IMR-90 (cell line): ENCODE measurements at regions of chr22 and their contacts with region 1.

Region 1: GRCh38 chr22:46576556-46577367 is 39.3 kb upstream of the CELSR1 start:
- DNase-seq: peak; percentile 35
- ATAC-seq: peak; percentile 86
- H3K4me3 ChIP-seq: peak overlapping the region; percentile 83
- H3K27ac ChIP-seq: no peak overlapping the region
- H3K4me1 ChIP-seq: peaks cover 16% of the 10 kb centered on the region
- H3K27me3 ChIP-seq: peaks cover 11% of the 10 kb centered on the region; the same call in 1 of the 2 replicates
- CTCF ChIP-seq: no peak
- POLR2A ChIP-seq: no peak
- RAD21 ChIP-seq: no peak

Region 2: GRCh38 chr22:46508491-46508999 is 68.2 kb before region 1 on chr22:
- CTCF ChIA-PET with region 1: no interaction called
- POLR2A ChIA-PET with region 1: no interaction called
- dilution Hi-C with region 1: no loop called
- in situ Hi-C with region 1: no loop called
- intact Hi-C with region 1: no loop called
- DNase-seq: no peak
- ATAC-seq: peak; percentile 32; the same call in 1 of the 2 replicates
- H3K4me3 ChIP-seq: no peak overlapping the region
- H3K27ac ChIP-seq: no peak overlapping the region
- H3K4me1 ChIP-seq: no peaks in the 10 kb centered on the region
- H3K27me3 ChIP-seq: peaks cover 10% of the 10 kb centered on the region; the same call in 1 of the 2 replicates
- CTCF ChIP-seq: no peak
- POLR2A ChIP-seq: no peak
- RAD21 ChIP-seq: no peak

Region 3: GRCh38 chr22:46542011-46542985 is 34.5 kb before region 1 on chr22:
- CTCF ChIA-PET with region 1: no interaction called
- POLR2A ChIA-PET with region 1: no interaction called
- dilution Hi-C with region 1: no loop called
- in situ Hi-C with region 1: no loop called
- intact Hi-C with region 1: no loop called
- DNase-seq: peak; percentile 50
- ATAC-seq: peak; percentile 95
- H3K4me3 ChIP-seq: no peak overlapping the region
- H3K27ac ChIP-seq: no peak overlapping the region
- H3K4me1 ChIP-seq: peaks cover 13% of the 10 kb centered on the region
- H3K27me3 ChIP-seq: peaks cover 21% of the 10 kb centered on the region
- CTCF ChIP-seq: peak; percentile 94
- POLR2A ChIP-seq: 0 out of 2 replicates have a peak, but pooled peaks have one; percentile 43
- RAD21 ChIP-seq: peak; percentile 96

Region 4: DNA sequence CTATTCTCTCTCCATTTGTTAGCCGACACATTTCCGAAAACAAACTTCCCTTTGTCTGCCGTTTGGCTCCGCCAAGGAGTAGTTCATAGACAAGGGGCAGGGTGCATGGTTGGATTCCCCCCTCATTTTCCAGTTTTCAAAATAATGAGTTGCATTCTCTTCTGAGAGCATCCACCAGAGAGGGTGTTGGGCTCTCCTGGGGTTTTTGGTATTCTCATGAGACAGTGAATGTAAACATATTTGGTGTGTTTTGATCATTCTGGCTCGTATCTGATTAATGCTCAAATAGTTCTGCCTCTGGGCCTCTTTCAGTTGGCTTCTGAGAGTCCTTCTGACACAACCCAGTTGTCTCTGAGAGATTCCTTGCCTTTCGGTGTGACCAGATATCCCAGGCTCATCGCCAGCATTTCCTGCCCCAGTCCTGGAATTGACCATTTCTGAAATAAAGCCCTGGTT is 65.1 kb after region 1 on chr22:
- CTCF ChIA-PET with region 1: no interaction called
- POLR2A ChIA-PET with region 1: no interaction called
- dilution Hi-C with region 1: no loop called
- in situ Hi-C with region 1: no loop called
- intact Hi-C with region 1: loop called (anchors 5 kb)
- DNase-seq: peak; percentile 36
- ATAC-seq: peak; percentile 67
- H3K4me3 ChIP-seq: no peak overlapping the region
- H3K27ac ChIP-seq: peak overlapping the region; percentile 77; the same call in 1 of the 2 replicates
- H3K4me1 ChIP-seq: peaks cover 10% of the 10 kb centered on the region
- H3K27me3 ChIP-seq: no peaks in the 10 kb centered on the region
- CTCF ChIP-seq: no peak
- POLR2A ChIP-seq: no peak
- RAD21 ChIP-seq: no peak

Region 5: DNA sequence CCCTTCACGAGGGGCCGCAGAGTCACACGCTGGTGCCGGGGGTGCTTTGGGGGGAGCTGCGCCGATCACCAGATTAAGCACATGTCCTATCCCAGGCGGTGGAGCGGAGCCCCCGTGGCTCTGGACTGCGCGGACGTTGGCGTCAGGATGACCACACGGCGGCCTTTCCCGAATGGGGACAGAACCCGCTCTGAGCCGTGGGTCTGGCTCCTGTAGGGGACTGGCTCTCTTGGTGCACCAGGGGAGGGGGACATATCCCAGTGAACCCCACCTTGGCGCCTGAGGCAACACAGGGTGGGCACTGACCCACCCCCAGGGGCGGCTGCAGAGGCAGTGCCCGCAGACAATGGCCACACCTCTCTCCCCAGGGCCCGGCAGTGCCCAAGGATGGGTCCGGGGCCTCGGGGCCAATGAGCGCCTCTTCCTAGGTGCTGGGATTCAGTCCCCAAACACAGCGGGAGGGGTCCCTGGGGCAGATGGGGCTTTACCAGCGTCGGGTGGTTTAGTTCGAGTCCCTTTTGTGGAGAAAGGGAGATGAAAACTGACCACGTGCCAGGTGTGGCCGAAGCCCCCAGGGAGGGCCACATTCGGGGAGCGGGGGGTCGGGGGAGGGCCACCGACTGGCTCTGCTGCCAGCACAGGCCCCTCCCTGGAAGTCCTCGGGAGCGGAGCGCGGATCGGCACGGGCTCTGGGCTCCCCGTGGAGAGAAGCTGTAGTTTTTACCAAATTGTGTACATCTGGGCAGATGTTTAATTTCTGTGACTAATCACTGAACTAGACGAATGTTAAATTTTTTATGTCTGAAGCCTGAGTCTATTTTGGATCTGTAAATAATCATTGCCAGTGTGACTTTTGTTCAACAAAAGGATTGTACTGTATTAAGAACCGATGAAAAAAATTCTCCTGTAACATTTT is 102.3 kb after region 1 on chr22:
- CTCF ChIA-PET with region 1: no interaction called
- POLR2A ChIA-PET with region 1: no interaction called
- dilution Hi-C with region 1: no loop called
- in situ Hi-C with region 1: no loop called
- intact Hi-C with region 1: loop called (anchors 5 kb)
- DNase-seq: peak; percentile 71
- ATAC-seq: peak; percentile 74
- H3K4me3 ChIP-seq: no peak overlapping the region
- H3K27ac ChIP-seq: peak overlapping the region; percentile 30; the same call in 1 of the 2 replicates
- H3K4me1 ChIP-seq: peaks cover 14% of the 10 kb centered on the region
- H3K27me3 ChIP-seq: no peaks in the 10 kb centered on the region
- CTCF ChIP-seq: no peak
- POLR2A ChIP-seq: no peak
- RAD21 ChIP-seq: no peak